CD8-positive, alpha-beta T cell (primary cell): ENCODE measurements at regions of chr19 and their contacts with region 1.

Region 1: GRCh38 chr19:11798391-11799330 is at the start of gene ZNF491:
- DNase-seq: peak; percentile 59 to 88 (median 84)
- ATAC-seq: peak; percentile 98
- H3K4me3 ChIP-seq: peak within 1 kb of the TSS; percentile 68 to 79
- H3K4me3 Mint-ChIP-seq: peak within 1 kb of the TSS; percentile 89
- H3K27ac ChIP-seq: peak within 1 kb of the TSS; percentile 57 to 63
- H3K27ac Mint-ChIP-seq: peak within 1 kb of the TSS; percentile 91
- H3K4me1 ChIP-seq: peaks cover 12% of the 10 kb centered on the region
- H3K4me1 Mint-ChIP-seq: peaks cover 17% of the 10 kb centered on the region
- H3K27me3 ChIP-seq: no peaks in the 10 kb centered on the region
- H3K27me3 Mint-ChIP-seq: no peaks in the 10 kb centered on the region
- CTCF ChIP-seq: peak; percentile 23
- total RNA-seq, gene ZNF491: 0.43 to 0.89 TPM

Region 2: GRCh38 chr19:11766597-11767591 is 31.8 kb before region 1 on chr19 and contains the start of gene ZNF441:
- CTCF ChIA-PET with region 1: interaction called, 15 read pairs
- POLR2A ChIA-PET with region 1: interaction called, 3 read pairs
- intact Hi-C with region 1: no loop called
- DNase-seq: peak; percentile 83 to 96 (median 90)
- ATAC-seq: peak; percentile 95
- H3K4me3 ChIP-seq: peak within 1 kb of the TSS; percentile 76 to 78
- H3K4me3 Mint-ChIP-seq: peak within 1 kb of the TSS; percentile 96
- H3K27ac ChIP-seq: peak within 1 kb of the TSS; percentile 79 to 88
- H3K27ac Mint-ChIP-seq: peak within 1 kb of the TSS; percentile 93
- H3K4me1 ChIP-seq: peaks cover 16% of the 10 kb centered on the region
- H3K4me1 Mint-ChIP-seq: peaks cover 26% of the 10 kb centered on the region
- H3K27me3 ChIP-seq: no peaks in the 10 kb centered on the region
- H3K27me3 Mint-ChIP-seq: peaks cover 7% of the 10 kb centered on the region
- CTCF ChIP-seq: no peak
- total RNA-seq, gene ZNF441: 1.9 to 2.3 TPM

Region 3: DNA sequence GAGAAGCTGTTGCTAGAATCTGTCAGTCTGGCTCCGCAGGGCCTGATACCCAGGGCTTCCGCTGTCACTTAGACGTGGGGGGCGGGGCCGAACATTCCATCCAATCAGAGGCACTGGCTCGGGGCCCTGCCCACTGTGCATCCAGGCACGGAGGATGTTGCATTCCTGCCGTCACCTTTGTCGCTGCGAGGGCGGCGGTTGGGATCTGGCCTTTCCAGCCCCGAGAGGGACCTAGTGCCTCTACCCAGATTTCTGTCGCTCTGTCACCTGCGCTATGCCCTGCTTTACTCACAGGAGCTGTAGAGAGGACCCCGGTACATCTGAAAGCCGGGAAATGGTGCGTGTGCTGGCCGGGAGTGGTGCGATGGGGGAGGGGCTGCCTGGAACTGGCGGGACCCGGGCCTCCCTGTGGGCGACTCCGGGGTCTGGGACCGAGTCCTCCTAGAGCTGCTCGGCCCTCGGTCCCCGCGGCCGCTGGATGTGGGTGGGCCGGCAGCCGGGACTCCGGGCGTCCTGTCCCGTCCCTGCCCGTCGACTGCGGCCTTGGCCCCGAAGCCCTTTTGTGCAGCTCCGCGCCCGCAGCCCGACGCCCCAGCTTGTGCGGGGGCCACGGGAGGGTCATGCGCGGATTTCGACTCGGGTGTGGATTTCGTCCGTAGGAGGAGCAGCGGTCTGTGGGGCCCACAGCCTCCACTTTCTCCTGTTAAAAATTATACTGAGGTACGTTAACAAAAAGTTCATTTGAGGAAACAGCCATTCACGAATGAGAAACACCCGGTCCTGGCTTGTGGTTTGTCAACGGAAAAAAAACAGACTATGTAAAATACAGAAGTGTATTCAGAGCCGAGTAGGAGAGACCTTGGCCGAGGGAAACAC is 50.2 kb after region 1 on chr19 and contains the start of gene ZNF439:
- CTCF ChIA-PET with region 1: interaction called, 8 read pairs
- POLR2A ChIA-PET with region 1: no interaction called
- intact Hi-C with region 1: loop called (anchors 1 kb)
- DNase-seq: peak; percentile 76 to 93 (median 89)
- ATAC-seq: peak; percentile 100
- H3K4me3 ChIP-seq: peak within 1 kb of the TSS; percentile 67 to 78
- H3K4me3 Mint-ChIP-seq: peak within 1 kb of the TSS; percentile 94
- H3K27ac ChIP-seq: peak within 1 kb of the TSS; percentile 55 to 64
- H3K27ac Mint-ChIP-seq: peak within 1 kb of the TSS; percentile 88
- H3K4me1 ChIP-seq: peaks cover 11% of the 10 kb centered on the region
- H3K4me1 Mint-ChIP-seq: peaks cover 24% of the 10 kb centered on the region
- H3K27me3 ChIP-seq: no peaks in the 10 kb centered on the region
- H3K27me3 Mint-ChIP-seq: no peaks in the 10 kb centered on the region
- CTCF ChIP-seq: no peak
- total RNA-seq, gene ZNF439: 6.2 to 7.9 TPM

Region 4: DNA sequence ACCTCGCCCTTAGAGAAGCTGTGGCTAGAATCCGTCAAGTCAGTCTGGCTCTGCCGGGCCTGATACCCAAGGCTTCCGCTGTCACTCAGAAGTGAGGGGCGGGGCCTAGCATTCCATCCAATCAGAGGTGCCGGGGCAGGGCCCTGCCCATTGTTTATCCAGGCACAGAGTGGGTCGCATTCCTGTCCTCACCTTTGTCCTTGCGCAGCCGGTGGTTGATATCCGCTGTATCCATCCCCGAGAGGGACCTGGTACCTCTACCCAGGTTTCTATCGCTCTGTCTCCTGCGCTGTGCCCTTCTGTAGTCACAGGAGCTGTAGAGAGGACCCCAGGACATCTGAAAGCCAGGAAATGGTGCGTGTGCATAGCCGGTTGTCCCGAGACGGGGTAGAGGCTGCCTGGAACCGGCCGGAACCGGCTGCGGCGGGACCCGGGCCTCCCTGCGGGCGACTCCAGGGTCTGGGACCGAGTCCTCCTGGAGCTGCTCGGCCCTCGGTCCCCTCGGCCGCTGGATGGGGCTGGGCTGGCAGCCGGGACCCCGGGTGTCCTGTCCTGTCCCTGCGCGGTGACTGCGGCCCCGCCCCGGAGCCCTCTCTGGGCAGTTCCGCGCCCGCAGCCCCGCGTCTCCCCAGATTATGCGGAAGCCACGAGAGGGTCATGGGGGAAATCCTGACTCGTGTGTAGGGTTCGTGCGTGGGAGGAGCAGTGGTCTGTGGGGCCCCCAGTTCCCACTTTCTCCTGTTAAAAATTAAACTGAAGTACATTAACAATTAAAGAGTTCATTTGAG is 166.4 kb after region 1 on chr19 and contains the start of gene ZNF763:
- CTCF ChIA-PET with region 1: interaction called, 12 read pairs
- POLR2A ChIA-PET with region 1: no interaction called
- intact Hi-C with region 1: loop called in 1 of 2 experiments (anchors 1 kb)
- DNase-seq: peak; percentile 73 to 93 (median 89)
- ATAC-seq: peak; percentile 93
- H3K4me3 ChIP-seq: peak within 1 kb of the TSS; percentile 69 to 93
- H3K4me3 Mint-ChIP-seq: peak within 1 kb of the TSS; percentile 97
- H3K27ac ChIP-seq: peak within 1 kb of the TSS; percentile 80 to 96
- H3K27ac Mint-ChIP-seq: peak within 1 kb of the TSS; percentile 98
- H3K4me1 ChIP-seq: peaks cover 13% of the 10 kb centered on the region
- H3K4me1 Mint-ChIP-seq: peaks cover 30% of the 10 kb centered on the region
- H3K27me3 ChIP-seq: no peaks in the 10 kb centered on the region
- H3K27me3 Mint-ChIP-seq: no peaks in the 10 kb centered on the region
- CTCF ChIP-seq: no peak
- total RNA-seq, gene ZNF763: 1.5 to 1.8 TPM

Region 5: GRCh38 chr19:12052497-12053169 is 254.0 kb after region 1 on chr19 and contains the start of gene ZNF878:
- CTCF ChIA-PET with region 1: interaction called, 4 read pairs
- POLR2A ChIA-PET with region 1: no interaction called
- intact Hi-C with region 1: loop called (anchors 2 to 5 kb)
- DNase-seq: peak in 8 of 9 experiments; percentile 19 to 65 (median 42)
- ATAC-seq: peak; percentile 72
- H3K4me3 ChIP-seq: peak within 1 kb of the TSS; percentile 59 to 75
- H3K4me3 Mint-ChIP-seq: peak within 1 kb of the TSS; percentile 84
- H3K27ac ChIP-seq: no peak within 1 kb of the TSS
- H3K27ac Mint-ChIP-seq: peak within 1 kb of the TSS; percentile 37
- H3K4me1 ChIP-seq: peaks cover 10% of the 10 kb centered on the region
- H3K4me1 Mint-ChIP-seq: peaks cover 15% of the 10 kb centered on the region
- H3K27me3 ChIP-seq: no peaks in the 10 kb centered on the region
- H3K27me3 Mint-ChIP-seq: peaks cover 12% of the 10 kb centered on the region
- CTCF ChIP-seq: no peak
- total RNA-seq, gene ZNF878: not detected